Activated CD4-positive, alpha-beta T cell treated with anti-CD3 and anti-CD28 coated beads, Interleukin-2, amount 10 ng/mL, durations not matched to agents 24 days and 14 days (primary cell): ENCODE measurements at regions of chr22 and their contacts with region 1.

Region 1: DNA sequence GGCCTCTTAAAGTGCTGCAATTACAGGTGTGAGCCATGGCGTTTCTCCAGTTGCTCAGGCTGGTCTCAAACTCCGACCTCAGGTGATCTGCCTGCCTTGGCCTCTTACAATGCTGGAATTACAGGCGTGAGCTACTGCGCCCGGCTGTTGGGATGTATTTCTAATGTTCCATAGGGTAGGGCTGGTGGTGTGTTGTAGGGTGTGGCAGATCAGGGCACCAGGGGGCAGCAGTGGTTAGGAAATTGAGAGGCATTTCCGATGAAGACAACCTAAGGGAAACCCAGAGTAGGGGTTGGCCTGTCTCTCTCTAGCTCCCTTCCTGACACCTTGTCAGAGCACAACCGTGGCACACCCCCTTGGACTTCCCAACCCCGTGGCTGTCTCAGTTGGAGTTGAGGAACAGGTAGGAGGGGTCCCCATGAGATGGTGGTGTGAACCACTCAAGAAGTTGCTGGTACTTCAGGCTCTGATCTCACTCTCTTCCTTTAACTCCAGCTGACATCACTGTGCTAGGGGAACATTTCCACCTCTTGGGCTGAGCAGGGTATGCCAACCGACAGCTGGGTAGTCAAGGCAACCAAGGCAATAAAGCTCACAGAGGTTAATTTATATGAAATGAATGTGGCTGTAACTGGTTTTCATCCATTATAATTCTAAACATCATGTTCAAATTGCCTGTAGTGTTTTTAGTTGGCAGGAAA is 33.0 kb downstream of the YWHAH start:
- DNase-seq: peak; percentile 93
- H3K4me3 Mint-ChIP-seq: no peak overlapping the region
- H3K27ac Mint-ChIP-seq: no peak overlapping the region
- H3K4me1 Mint-ChIP-seq: peaks cover 5% of the 10 kb centered on the region
- H3K27me3 Mint-ChIP-seq: peaks cover 16% of the 10 kb centered on the region

Region 2: GRCh38 chr22:32080904-32081303 is 103.6 kb after region 1 on chr22:
- intact Hi-C with region 1: loop called (anchors 1 kb)
- DNase-seq: peak; percentile 74
- H3K4me3 Mint-ChIP-seq: no peak overlapping the region
- H3K27ac Mint-ChIP-seq: no peak overlapping the region
- H3K4me1 Mint-ChIP-seq: no peaks in the 10 kb centered on the region
- H3K27me3 Mint-ChIP-seq: peaks cover 15% of the 10 kb centered on the region

Region 3: DNA sequence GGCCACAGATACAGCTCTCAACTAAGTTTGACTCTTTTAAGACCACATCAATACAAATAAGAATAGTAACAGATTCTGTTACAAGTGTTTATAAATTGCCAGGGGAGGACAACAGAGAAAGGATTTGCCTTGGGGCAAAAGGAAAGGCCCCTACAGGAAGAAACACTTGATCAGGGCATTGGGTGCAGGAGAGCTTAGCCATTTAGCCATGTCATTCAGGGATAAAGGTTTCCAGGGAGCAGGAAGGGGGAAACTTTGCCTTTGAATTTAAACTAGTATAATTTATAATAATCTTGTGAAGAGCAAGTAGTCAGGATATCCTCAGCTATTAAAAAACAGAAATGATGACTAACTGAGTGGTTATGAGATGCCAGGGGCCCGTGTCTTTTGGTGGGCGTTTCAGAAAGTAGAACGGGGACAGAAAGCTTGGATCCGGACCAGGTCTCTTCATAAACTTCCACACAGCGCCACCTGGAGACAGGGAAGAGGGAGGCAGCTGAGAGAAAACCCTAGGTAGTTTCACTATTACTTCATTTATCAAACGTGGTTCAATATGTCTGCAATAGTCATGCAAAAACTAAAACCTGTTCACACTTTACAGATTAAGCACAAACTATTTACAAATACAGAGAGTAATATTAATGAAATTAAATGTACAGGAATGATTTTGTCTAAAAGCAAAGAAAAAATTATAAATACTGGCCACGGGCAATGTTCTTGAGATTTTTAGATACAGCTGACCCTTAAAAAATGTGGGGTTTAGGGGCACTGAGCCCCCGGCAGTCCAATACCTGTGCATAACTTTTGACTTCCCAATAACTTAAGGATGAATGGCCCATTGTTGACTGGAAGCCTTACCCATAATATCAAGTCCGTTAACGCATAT is 288.8 kb after region 1 on chr22:
- intact Hi-C with region 1: loop called (anchors 1 kb)
- DNase-seq: peak; percentile 90
- H3K4me3 Mint-ChIP-seq: no peak overlapping the region
- H3K27ac Mint-ChIP-seq: no peak overlapping the region
- H3K4me1 Mint-ChIP-seq: peaks cover 10% of the 10 kb centered on the region
- H3K27me3 Mint-ChIP-seq: peaks cover 2% of the 10 kb centered on the region